SK-N-SH (cell line): ENCODE measurements at regions of chr7 and their contacts with region 1.

Region 1: DNA sequence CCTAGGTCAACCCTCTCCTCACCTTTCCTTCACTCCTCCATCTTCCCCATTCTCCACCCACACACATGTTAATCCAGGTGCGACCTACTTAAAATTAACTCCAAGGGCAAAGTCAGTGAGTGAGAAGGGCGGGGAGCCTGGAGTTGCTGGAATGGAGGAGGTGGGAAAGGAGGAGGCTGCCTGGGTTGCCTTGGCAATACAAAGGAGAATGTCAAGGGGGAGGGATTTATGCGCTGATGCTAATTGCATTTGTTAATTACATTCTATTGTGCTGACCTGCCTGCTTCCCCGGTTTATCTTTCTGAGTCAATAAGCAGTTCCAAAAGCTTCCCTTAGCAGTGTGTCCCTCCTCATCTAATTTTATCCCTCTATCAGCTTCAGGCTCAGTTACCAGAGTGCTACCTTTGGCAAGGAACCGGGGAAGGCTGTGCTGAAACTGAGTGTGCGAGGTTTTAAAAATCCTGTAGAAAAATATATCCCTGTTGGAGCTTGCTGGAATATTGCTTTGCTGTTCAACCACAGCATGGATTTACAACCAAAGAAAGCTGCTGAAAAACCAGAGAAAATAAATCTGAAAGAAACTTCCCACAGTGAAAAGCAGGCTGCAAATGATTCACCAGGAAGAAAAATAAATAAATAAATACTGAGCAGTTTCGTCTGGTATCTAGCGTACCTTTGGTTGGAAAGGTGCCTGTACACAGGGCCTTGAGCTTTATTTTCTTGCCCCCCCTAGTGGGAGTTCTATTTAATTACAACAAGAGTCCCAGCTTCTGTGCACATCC is 113.2 kb upstream of the DGKB start:
- DNase-seq: peak; percentile 49
- H3K4me3 ChIP-seq: peak overlapping the region; percentile 37 to 45
- H3K27ac ChIP-seq: peak overlapping the region; percentile 45 to 80; a peak in 3 of 4 replicates
- H3K4me1 ChIP-seq: peaks cover 7 to 14% of the 10 kb centered on the region in 2 experiments
- H3K27me3 ChIP-seq: no peaks in the 10 kb centered on the region
- CTCF ChIP-seq: peak; percentile 96
- EP300 ChIP-seq: peak in 1 of 2 experiments; percentile 5; a peak in 1 of 4 replicates
- RAD21 ChIP-seq: peak; percentile 97

Region 2: GRCh38 chr7:13279854-13280435 is 1735.8 kb before region 1 on chr7:
- CTCF ChIA-PET with region 1: interaction called, 14 read pairs
- POLR2A ChIA-PET with region 1: no interaction called
- DNase-seq: peak; percentile 23
- H3K4me3 ChIP-seq: no peak overlapping the region
- H3K27ac ChIP-seq: no peak overlapping the region
- H3K4me1 ChIP-seq: no peaks in the 10 kb centered on the region
- H3K27me3 ChIP-seq: no peaks in the 10 kb centered on the region; the same call in 1 of the 2 replicates
- CTCF ChIP-seq: peak; percentile 79
- EP300 ChIP-seq: no peak
- RAD21 ChIP-seq: peak; percentile 73

Region 3: DNA sequence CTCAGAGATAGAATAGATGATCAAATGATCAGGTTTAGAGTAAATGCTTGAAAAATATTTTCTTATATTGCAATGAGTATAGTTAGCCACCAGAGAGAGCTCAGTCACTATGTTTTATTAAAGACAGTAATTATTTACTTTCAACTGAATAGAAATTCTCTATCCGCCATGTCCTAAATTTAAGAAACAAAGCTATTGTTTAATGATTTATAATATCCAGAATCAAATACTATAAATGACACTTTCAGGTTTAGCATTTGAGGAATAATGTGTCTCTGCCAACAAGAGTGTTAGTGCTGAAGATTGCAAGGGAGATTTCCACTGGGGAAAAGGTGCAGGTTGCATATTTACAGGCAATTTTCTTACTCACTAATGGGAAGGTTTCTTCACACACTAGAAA is 297.9 kb before region 1 on chr7:
- CTCF ChIA-PET with region 1: interaction called, 106 read pairs
- POLR2A ChIA-PET with region 1: interaction called, 3 read pairs
- DNase-seq: peak; percentile 40
- H3K4me3 ChIP-seq: no peak overlapping the region
- H3K27ac ChIP-seq: no peak overlapping the region
- H3K4me1 ChIP-seq: no peaks in the 10 kb centered on the region
- H3K27me3 ChIP-seq: no peaks in the 10 kb centered on the region
- CTCF ChIP-seq: peak; percentile 97
- EP300 ChIP-seq: no peak
- RAD21 ChIP-seq: peak; percentile 91

Region 4: GRCh38 chr7:14734839-14735321 is 280.9 kb before region 1 on chr7:
- CTCF ChIA-PET with region 1: interaction called, 10 read pairs
- POLR2A ChIA-PET with region 1: no interaction called
- DNase-seq: peak; percentile 43
- H3K4me3 ChIP-seq: no peak overlapping the region
- H3K27ac ChIP-seq: no peak overlapping the region
- H3K4me1 ChIP-seq: no peaks in the 10 kb centered on the region; a peak in 1 of 4 replicates
- H3K27me3 ChIP-seq: no peaks in the 10 kb centered on the region
- CTCF ChIP-seq: peak; percentile 41
- EP300 ChIP-seq: no peak
- RAD21 ChIP-seq: no peak

Region 5: DNA sequence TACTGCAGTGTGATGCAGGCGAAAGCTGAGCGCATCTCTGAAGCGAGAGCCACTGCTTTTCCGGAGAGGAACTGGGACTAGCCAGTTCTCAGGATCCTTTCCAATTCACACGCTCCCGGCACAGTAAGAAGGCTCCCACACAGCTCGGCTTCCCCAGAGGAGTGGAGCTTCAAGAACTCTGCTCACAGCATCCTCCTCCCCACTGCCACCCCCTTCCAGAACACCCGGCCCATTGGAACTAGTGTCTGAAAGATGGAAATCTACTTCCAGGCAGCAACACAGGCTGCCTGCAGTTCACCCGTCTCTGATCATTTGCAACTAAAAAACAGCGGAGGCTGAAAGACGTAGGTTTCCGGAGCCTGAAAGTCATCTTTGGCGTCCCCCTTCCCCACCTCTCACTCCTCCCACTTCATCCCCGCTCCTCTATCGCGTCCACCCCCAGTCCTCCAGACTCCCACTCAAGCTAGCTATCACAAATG is 113.1 kb before region 1 on chr7 and contains the start of gene DGKB:
- CTCF ChIA-PET with region 1: interaction called, 18 read pairs
- POLR2A ChIA-PET with region 1: no interaction called
- DNase-seq: peak; percentile 52
- H3K4me3 ChIP-seq: peak within 1 kb of the TSS; percentile 54 to 65
- H3K27ac ChIP-seq: peak within 1 kb of the TSS; percentile 71 to 74
- H3K4me1 ChIP-seq: peaks cover 0 to 23% of the 10 kb centered on the region in 2 experiments; a peak in 2 of 4 replicates
- H3K27me3 ChIP-seq: no peaks in the 10 kb centered on the region
- CTCF ChIP-seq: no peak
- EP300 ChIP-seq: no peak
- RAD21 ChIP-seq: no peak
- polyA plus RNA-seq, gene DGKB: 2.1 and 3.3 TPM in 2 replicates

Region 6: GRCh38 chr7:14999331-14999730 is 16.4 kb before region 1 on chr7:
- CTCF ChIA-PET with region 1: interaction called, 39 read pairs
- POLR2A ChIA-PET with region 1: no interaction called
- DNase-seq: no peak
- H3K4me3 ChIP-seq: no peak overlapping the region
- H3K27ac ChIP-seq: no peak overlapping the region
- H3K4me1 ChIP-seq: no peaks in the 10 kb centered on the region
- H3K27me3 ChIP-seq: no peaks in the 10 kb centered on the region
- CTCF ChIP-seq: no peak
- EP300 ChIP-seq: no peak
- RAD21 ChIP-seq: no peak